ENCODE measurements at regions of chr12 and their contacts with region 1.

Region 1: DNA sequence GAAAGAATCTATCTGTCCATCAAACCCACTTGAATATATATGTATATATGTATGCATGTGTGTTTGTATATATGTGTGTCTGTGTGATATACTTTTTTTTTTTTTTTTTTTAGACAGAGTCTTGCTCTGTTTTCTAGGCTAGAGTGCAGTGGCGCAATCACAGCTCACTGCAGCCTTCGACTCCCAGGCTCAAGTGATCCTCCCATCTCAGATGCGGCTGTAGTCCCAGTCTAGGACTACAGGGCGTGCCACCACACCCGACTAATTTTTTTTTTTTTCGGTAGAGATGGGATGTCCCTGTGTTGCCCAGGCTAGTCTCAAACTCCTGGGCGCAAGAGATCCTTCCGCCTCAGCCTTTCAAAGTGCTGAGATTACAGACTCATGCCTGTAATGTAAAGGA is 13.0 kb upstream of the APOBEC1 start:
- DNase-seq: no peak
- ATAC-seq: no peak
- H3K4me3 ChIP-seq: no peak overlapping the region
- H3K27ac ChIP-seq: no peak overlapping the region
- H3K4me1 ChIP-seq: peaks cover 0 to 3% (median 0%) of the 10 kb centered on the region in 12 donors
- H3K27me3 ChIP-seq: peaks cover 0 to 7% (median 0%) of the 10 kb centered on the region in 9 donors
- CTCF ChIP-seq: no peak
- POLR2A ChIP-seq: no peak

Region 2: GRCh38 chr12:7806863-7807487 is 128.2 kb after region 1 on chr12:
- intact Hi-C with region 1: loop called (anchors 1 to 10 kb)
- DNase-seq: peak; percentile 32 to 70 (median 45)
- ATAC-seq: peak in 3 of 4 donors; percentile 67 to 77 (median 71)
- H3K4me3 ChIP-seq: no peak overlapping the region
- H3K27ac ChIP-seq: no peak overlapping the region
- H3K4me1 ChIP-seq: no peaks in the 10 kb centered on the region
- H3K27me3 ChIP-seq: peaks cover 0 to 4% (median 0%) of the 10 kb centered on the region in 9 donors
- CTCF ChIP-seq: peak; percentile 72 to 91 (median 86)
- POLR2A ChIP-seq: no peak

Measured in heart left ventricle (tissue), 16 donors.